ENCODE measurements at regions of chr3 and their contacts with region 1.

Region 1: DNA sequence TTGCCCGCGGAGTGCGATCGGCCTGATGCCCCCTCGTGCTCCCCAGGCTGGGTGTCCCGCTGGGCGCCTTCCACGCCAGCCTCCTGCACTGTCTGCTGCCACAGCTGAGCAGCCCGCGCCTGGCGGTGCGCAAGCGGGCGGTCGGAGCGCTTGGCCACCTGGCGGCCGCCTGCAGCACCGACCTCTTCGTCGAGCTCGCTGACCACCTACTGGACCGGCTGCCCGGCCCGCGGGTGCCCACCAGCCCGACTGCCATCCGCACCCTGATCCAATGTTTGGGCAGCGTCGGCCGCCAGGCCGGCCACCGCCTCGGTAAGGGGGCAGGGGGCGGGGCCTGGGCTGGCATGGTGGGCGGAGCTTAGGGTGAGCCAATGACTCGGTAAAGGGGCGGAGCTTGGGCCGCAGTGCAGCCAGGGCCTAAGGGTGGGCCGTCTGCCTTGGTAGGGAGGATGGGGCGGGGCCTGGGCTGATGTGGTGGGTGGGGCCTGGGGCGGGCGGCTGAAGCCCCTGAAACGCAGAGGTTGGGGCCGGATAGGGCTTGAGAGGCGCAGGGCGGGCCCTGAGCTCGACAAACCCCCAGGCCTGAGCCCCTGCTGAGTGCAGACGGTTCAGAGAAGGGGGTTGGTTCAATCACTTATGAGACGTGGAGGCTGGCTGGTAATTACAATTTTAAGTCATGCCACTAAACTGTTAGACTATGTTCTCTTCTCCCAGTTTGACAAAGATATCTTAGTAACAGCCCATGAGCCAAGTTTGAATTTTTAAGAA is 13.7 kb downstream of the CAND2 start:
- DNase-seq: peak; percentile 93
- ATAC-seq: peak; percentile 100
- H3K4me3 Mint-ChIP-seq: peak overlapping the region; percentile 69
- H3K27ac Mint-ChIP-seq: peak overlapping the region; percentile 50
- H3K4me1 Mint-ChIP-seq: peaks cover 9% of the 10 kb centered on the region
- H3K27me3 Mint-ChIP-seq: no peaks in the 10 kb centered on the region
- CTCF ChIP-seq: no peak

Region 2: DNA sequence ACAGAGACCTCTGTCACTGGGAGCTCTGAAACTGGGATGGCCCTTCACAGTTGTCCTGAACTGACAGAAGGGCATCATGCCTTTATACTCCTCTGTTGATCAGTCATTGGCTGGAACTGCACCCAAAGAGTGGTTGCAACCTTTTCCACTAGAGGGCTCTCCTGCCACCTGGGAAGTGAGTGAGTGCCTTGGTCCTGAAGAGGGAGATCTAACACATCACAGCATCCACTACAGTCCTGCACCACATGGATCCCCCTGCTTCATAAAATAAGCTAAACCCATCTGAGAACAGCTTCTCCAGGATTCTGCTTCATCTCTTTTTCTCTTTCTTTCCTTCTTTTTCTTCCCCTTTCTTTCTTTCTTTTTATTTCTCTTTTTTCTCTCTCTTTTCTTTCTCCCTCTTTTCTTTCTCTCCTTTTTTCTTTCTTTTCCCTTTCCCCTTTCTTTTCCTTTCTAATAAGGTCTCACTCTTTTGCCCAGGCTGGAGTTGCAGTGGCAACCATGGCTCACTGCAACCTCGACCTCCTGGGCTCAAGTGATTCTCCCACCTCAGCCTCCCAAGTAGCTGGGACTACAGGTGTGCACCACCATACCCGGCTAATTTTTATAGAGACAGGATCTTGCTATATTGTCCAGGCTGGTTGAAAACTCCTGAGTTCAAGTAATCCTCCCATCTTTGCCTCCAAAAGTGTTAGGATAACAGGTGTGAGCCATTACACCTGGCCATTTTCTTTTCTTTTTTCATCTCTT is 103.5 kb before region 1 on chr3:
- CTCF ChIA-PET with region 1: interaction called, 3 read pairs
- POLR2A ChIA-PET with region 1: no interaction called
- intact Hi-C with region 1: loop called (anchors 1 kb)
- DNase-seq: peak; percentile 24
- ATAC-seq: peak; percentile 98
- H3K4me3 Mint-ChIP-seq: no peak overlapping the region
- H3K27ac Mint-ChIP-seq: no peak overlapping the region
- H3K4me1 Mint-ChIP-seq: no peaks in the 10 kb centered on the region
- H3K27me3 Mint-ChIP-seq: peaks cover 3% of the 10 kb centered on the region
- CTCF ChIP-seq: no peak

Region 3: GRCh38 chr3:12750223-12750622 is 60.0 kb before region 1 on chr3:
- CTCF ChIA-PET with region 1: interaction called, 7 read pairs
- POLR2A ChIA-PET with region 1: interaction called, 6 read pairs
- intact Hi-C with region 1: loop called (anchors 1 kb)
- DNase-seq: no peak
- ATAC-seq: peak; percentile 9
- H3K4me3 Mint-ChIP-seq: no peak overlapping the region
- H3K27ac Mint-ChIP-seq: peak overlapping the region; percentile 7
- H3K4me1 Mint-ChIP-seq: peaks cover 33% of the 10 kb centered on the region
- H3K27me3 Mint-ChIP-seq: peaks cover 1% of the 10 kb centered on the region
- CTCF ChIP-seq: no peak

Region 4: GRCh38 chr3:12796171-12797123 is 13.8 kb before region 1 on chr3 and contains the start of gene CAND2:
- CTCF ChIA-PET with region 1: interaction called, 10 read pairs
- POLR2A ChIA-PET with region 1: no interaction called
- intact Hi-C with region 1: loop called (anchors 1 kb)
- DNase-seq: peak; percentile 46
- ATAC-seq: peak; percentile 78
- H3K4me3 Mint-ChIP-seq: peak within 1 kb of the TSS; percentile 87
- H3K27ac Mint-ChIP-seq: no peak within 1 kb of the TSS
- H3K4me1 Mint-ChIP-seq: peaks cover 20% of the 10 kb centered on the region
- H3K27me3 Mint-ChIP-seq: peaks cover 3% of the 10 kb centered on the region
- CTCF ChIP-seq: no peak
- total RNA-seq, gene CAND2: 0.22 and 0.42 TPM in 2 replicates

Region 5: GRCh38 chr3:12853191-12853741 is 43.1 kb after region 1 on chr3:
- CTCF ChIA-PET with region 1: no interaction called
- POLR2A ChIA-PET with region 1: interaction called, 19 read pairs
- intact Hi-C with region 1: no loop called
- DNase-seq: no peak
- ATAC-seq: no peak
- H3K4me3 Mint-ChIP-seq: no peak overlapping the region
- H3K27ac Mint-ChIP-seq: no peak overlapping the region
- H3K4me1 Mint-ChIP-seq: no peaks in the 10 kb centered on the region
- H3K27me3 Mint-ChIP-seq: peaks cover 25% of the 10 kb centered on the region
- CTCF ChIP-seq: no peak

Region 6: DNA sequence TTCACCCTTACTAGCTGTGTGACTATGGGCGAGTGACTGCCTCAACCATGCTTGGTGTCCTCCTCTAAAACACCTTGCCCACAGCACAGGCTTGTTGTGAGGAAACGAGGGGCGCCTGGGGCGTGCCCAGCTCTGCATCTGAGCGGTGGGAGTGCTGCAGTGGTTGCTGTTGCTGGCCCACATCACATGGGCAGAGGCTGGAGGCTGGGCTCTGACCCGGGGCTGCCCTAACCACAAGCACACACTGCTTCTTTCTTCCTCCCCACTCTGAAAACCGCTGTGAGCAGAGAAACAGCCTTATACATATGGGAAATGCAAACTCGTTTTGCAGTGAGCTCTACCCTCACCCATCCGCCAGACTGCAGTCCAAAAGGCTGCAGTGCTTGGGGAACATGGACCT is 106.0 kb after region 1 on chr3:
- CTCF ChIA-PET with region 1: no interaction called
- POLR2A ChIA-PET with region 1: no interaction called
- intact Hi-C with region 1: no loop called
- DNase-seq: no peak
- ATAC-seq: no peak
- H3K4me3 Mint-ChIP-seq: no peak overlapping the region
- H3K27ac Mint-ChIP-seq: peak overlapping the region; percentile 7
- H3K4me1 Mint-ChIP-seq: peaks cover 3% of the 10 kb centered on the region
- H3K27me3 Mint-ChIP-seq: no peaks in the 10 kb centered on the region
- CTCF ChIP-seq: no peak